Endothelial cell of umbilical vein (primary cell): ENCODE measurements at regions of chr6 and their contacts with region 1.

Region 1: DNA sequence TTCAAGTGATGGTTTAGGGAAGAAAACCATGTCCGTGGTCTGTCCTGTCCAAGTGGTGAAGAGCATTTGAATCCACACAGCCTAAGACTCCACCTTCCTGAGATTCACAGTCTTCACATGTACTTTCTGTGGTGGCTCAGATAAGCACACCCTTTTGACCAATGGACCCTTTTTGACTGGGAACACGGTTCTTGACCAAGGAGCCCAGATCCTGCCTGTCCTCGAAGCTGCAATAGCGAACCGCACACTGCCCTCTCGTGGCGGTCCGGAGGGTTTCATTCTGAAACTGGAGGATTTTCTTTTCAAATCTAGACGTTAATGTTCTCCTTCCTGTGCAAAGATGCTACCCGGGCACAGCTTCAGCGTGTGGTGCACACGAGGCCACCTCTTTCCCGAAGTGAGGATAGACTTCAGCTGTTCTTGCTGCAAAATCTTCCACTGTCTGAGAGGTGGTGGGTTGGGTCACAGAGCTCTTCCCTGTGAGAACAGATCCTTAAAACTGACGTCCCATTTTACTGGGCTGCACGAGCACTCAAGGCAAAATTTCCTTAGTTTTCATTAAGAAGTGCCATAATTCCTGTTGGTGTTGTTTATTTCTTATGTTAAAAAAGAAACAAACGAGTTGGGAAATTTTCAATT is 90.5 kb downstream of the SYNJ2 start:
- DNase-seq: peak; percentile 76
- H3K4me3 ChIP-seq: no peak overlapping the region
- H3K27ac ChIP-seq: peak overlapping the region; percentile 34
- H3K4me1 ChIP-seq: peaks cover 38% of the 10 kb centered on the region
- H3K27me3 ChIP-seq: no peaks in the 10 kb centered on the region
- CTCF ChIP-seq: peak; percentile 76 to 86
- POLR2A ChIP-seq: no peak

Region 2: DNA sequence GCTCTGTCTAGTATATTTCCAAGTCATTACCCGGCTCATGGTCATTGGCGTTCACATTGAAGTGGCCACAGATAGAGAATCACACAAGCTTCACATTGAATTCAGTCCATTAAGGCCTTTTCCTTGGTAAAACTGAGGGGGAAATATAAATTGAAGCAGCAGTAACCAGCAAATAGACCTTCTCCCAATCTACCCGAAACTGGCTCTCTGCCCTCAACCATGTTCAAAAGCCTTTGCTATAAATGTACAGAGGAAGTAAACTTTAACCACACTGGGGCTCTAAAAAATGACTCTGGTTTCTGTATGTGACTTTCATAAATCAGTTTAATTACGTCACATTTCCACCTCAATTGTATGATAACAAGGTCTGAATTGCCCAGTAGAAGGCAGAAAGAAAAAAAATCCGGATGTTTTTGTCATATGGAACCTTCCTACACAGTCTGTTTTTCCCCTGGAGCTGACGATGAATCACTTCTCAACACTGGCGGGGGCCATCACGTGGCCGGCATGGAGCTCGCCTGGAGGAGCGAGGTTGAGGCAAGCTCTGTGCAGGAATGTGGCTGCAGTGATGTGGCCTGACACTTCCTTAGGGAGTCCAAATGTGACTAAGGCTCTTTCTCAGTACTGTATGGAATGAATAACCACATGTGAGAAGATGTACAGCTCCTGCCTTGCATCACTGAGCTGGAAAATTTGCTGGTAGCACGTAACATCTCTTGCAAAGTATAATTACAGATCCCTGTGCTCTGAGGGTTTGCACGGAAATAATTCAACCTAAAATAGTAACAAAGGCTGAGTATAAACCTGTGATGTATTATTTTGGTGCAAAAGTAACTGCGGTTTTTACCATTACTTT is 307.8 kb before region 1 on chr6:
- CTCF ChIA-PET with region 1: interaction called, 3 read pairs
- POLR2A ChIA-PET with region 1: no interaction called
- dilution Hi-C with region 1: no loop called
- intact Hi-C with region 1: loop called (anchors 1 kb)
- DNase-seq: peak; percentile 99
- H3K4me3 ChIP-seq: peak overlapping the region in 1 of 3 experiments; percentile 4
- H3K27ac ChIP-seq: peak overlapping the region; percentile 97
- H3K4me1 ChIP-seq: peaks cover 51% of the 10 kb centered on the region
- H3K27me3 ChIP-seq: no peaks in the 10 kb centered on the region
- CTCF ChIP-seq: no peak
- POLR2A ChIP-seq: no peak

Region 3: DNA sequence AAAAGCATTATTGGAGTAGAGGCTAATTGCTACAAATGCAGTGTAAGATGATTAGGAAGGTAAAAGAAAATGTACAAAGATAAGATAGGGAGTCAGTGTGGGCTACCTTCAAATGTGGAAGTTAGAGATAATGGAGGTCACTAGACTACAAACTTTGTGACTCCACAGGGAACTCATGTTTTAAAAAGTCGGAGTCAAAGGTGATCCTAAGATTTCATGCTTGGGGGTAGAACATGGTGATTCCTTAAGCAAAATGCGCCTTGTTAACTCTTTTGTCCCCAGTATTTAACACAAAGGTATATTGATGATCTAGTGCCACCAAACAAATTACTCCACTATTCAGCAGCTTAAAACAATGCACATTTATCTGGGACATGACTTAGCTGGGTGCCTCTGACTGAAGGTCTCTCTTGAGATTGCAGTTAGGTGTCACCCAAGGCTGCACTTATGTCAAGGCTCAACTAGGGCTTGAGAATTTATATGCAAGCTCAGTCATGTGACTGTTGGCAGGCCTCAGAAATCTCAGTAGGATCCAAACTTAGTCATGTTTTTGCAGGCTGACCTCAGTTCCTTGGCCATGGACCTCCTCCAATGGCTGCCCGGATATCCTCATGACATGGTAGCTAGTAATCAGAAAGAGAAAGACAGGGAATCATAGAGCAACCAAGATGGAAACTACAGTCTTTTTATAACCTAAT is 260.6 kb before region 1 on chr6:
- CTCF ChIA-PET with region 1: no interaction called
- POLR2A ChIA-PET with region 1: no interaction called
- dilution Hi-C with region 1: no loop called
- intact Hi-C with region 1: no loop called
- DNase-seq: peak; percentile 44
- H3K4me3 ChIP-seq: no peak overlapping the region
- H3K27ac ChIP-seq: no peak overlapping the region
- H3K4me1 ChIP-seq: peaks cover 17% of the 10 kb centered on the region
- H3K27me3 ChIP-seq: no peaks in the 10 kb centered on the region
- CTCF ChIP-seq: no peak
- POLR2A ChIP-seq: no peak

Region 4: GRCh38 chr6:157937916-157938315 is 134.3 kb before region 1 on chr6:
- CTCF ChIA-PET with region 1: interaction called, 11 read pairs
- POLR2A ChIA-PET with region 1: no interaction called
- dilution Hi-C with region 1: no loop called
- intact Hi-C with region 1: loop called (anchors 2 kb)
- DNase-seq: no peak
- H3K4me3 ChIP-seq: no peak overlapping the region
- H3K27ac ChIP-seq: no peak overlapping the region
- H3K4me1 ChIP-seq: no peaks in the 10 kb centered on the region
- H3K27me3 ChIP-seq: no peaks in the 10 kb centered on the region
- CTCF ChIP-seq: no peak
- POLR2A ChIP-seq: no peak

Region 5: DNA sequence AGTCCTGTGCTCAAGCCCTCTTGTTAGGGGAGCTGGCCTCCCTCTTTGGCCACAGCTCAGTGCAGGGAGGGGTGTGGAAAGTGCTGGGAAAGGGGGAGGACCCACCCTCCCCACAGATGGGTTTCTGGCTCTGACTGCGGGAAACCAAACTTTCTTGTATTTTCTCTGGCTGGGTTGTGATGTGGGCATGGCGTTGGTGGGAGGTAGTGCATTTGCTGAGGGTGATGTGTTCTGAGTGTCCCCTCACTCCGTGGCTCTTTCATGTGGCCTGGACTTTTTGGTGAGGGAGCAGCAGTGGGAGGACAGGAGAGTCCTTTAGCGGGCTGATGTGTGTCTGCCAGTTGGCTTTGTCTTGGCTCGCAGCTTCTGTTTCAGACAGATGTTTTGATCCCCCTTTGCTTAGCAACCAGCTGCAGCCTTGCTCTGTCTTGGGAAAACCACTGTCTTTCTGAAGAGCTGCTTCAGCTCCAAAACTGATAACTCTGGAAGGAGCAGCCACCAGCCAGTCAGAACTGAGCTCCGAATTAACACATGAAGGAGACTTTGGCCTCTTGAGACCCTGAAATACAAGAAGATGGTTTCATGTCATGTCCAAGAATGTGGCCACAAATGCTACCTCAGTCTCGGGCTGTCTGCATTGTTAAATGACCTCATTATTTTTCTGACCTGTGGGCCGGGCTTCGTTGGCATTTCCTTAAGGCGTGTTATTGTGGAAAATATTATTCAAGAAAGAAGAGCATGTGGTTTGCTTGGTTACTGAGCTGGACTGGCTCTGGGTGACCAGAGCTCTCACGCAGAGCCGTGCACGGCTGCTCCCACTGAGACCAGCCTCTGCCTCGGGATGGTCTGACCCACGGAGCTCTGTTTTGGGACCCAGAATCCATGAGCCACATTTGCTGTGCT is 69.0 kb before region 1 on chr6:
- CTCF ChIA-PET with region 1: interaction called, 13 read pairs
- POLR2A ChIA-PET with region 1: interaction called, 3 read pairs
- dilution Hi-C with region 1: no loop called
- intact Hi-C with region 1: loop called (anchors 1 kb)
- DNase-seq: peak; percentile 97
- H3K4me3 ChIP-seq: no peak overlapping the region
- H3K27ac ChIP-seq: peak overlapping the region; percentile 91
- H3K4me1 ChIP-seq: peaks cover 32% of the 10 kb centered on the region
- H3K27me3 ChIP-seq: no peaks in the 10 kb centered on the region
- CTCF ChIP-seq: no peak
- POLR2A ChIP-seq: peak; percentile 43

Region 6: DNA sequence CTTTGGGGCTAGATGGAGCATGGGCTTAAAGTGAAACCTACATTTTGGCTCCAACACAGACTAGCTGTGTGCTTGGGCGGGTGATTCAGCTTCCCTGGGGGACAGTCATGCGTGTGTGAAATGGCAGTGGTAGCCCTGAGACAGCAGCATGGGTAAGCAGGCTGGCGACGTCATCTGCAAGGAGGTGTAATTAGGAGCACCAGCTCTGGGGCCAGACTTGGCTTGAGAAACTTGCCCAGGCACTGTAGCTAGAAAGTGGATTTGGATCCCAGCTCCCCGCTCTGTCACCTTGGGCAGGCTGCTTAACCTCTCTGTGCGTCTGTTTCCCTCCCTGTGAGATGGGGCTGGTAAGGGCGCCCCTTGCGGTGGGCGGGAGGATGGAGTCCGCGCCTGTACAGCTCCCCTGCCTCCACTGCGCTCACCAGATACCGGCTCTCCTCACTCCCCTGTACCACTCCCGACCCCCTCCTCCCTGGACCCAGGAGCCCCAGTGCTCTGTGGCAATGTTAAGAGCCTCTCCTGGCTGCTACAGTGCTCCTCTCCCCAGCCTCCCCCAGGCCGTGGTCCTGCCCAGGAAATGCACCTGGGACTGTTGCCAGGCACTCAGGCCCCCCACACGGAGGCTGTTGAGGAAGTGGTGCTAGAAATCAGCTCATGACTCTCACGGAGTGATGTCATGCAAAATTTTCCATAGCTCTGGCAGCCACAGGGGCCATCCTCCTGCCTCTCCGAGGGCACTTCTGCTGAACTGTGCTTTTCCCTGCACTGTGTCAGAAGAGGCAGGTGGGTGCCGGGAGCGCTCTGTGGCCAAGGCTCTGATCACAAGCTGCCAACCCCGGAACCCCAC is 45.9 kb before region 1 on chr6:
- CTCF ChIA-PET with region 1: interaction called, 30 read pairs
- POLR2A ChIA-PET with region 1: no interaction called
- dilution Hi-C with region 1: no loop called
- intact Hi-C with region 1: loop called (anchors 1 kb)
- DNase-seq: peak; percentile 98
- H3K4me3 ChIP-seq: no peak overlapping the region
- H3K27ac ChIP-seq: peak overlapping the region; percentile 83
- H3K4me1 ChIP-seq: peaks cover 32% of the 10 kb centered on the region
- H3K27me3 ChIP-seq: no peaks in the 10 kb centered on the region
- CTCF ChIP-seq: peak; percentile 74 to 90
- POLR2A ChIP-seq: no peak

Region 7: DNA sequence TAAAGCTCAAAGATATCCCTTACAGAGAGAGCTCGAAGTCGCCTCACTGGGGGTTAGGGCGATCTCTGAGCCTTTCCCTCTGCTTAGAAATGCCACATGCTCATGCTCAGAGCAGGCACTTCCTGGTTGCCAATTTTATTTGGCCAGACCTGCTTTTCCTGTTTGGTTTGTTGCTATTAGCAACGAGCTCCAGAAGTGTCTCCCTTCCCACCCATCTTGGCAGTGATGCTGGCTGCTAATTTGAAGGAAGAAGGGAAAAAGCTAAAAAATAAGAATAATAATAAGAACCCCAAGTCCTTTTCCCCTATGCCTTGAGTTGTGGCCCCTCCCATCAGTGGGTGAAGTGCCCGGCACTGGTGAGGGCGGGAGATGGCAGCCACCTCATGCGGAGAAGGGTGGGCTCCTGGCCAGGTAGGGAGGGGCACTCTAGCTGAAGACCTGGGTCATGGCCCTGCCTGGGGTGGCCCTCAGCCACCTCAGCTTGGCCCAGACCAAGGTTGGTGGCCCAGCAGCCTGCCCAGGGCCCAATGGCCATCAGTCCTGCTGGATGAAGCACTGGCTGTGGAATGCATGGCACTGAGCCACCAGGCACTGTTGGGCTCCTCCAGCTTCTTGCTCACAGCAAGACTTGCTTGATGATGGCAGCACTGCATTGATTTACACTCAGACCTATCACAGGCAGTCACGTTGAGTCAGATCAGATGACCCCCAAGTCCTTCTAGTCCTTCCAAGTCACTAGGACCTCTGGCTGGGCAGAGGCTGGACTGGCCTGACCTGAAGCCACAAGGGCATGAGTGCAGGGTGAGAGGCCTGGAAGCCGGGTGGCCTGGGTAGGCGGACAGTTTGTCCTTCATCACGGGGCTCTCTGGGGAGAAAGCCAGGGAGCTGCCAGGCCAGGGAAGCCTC is 11.5 kb before region 1 on chr6:
- CTCF ChIA-PET with region 1: interaction called, 83 read pairs
- POLR2A ChIA-PET with region 1: no interaction called
- dilution Hi-C with region 1: no loop called
- intact Hi-C with region 1: loop called (anchors 1 kb)
- DNase-seq: peak; percentile 92
- H3K4me3 ChIP-seq: no peak overlapping the region
- H3K27ac ChIP-seq: peak overlapping the region; percentile 99
- H3K4me1 ChIP-seq: peaks cover 62% of the 10 kb centered on the region
- H3K27me3 ChIP-seq: no peaks in the 10 kb centered on the region
- CTCF ChIP-seq: no peak
- POLR2A ChIP-seq: no peak

Region 8: GRCh38 chr6:158122048-158122447 is 49.8 kb after region 1 on chr6:
- CTCF ChIA-PET with region 1: no interaction called
- POLR2A ChIA-PET with region 1: no interaction called
- dilution Hi-C with region 1: no loop called
- intact Hi-C with region 1: no loop called
- DNase-seq: no peak
- H3K4me3 ChIP-seq: no peak overlapping the region
- H3K27ac ChIP-seq: no peak overlapping the region
- H3K4me1 ChIP-seq: no peaks in the 10 kb centered on the region
- H3K27me3 ChIP-seq: no peaks in the 10 kb centered on the region
- CTCF ChIP-seq: no peak
- POLR2A ChIP-seq: no peak